PC-3 (cell line): ENCODE measurements at regions of chr2 and their contacts with region 1.

Region 1: GRCh38 chr2:177983183-177983788 is 89.3 kb downstream of the PDE11A start:
- DNase-seq: peak; percentile 66
- ATAC-seq: peak; percentile 67
- H3K4me3 ChIP-seq: no peak overlapping the region
- H3K27ac ChIP-seq: no peak overlapping the region
- H3K4me1 ChIP-seq: no peaks in the 10 kb centered on the region
- H3K27me3 ChIP-seq: peaks cover 27% of the 10 kb centered on the region
- CTCF ChIP-seq: peak; percentile 90

Region 2: GRCh38 chr2:177842243-177842642 is 141.0 kb before region 1 on chr2:
- CTCF ChIA-PET with region 1: no interaction called
- POLR2A ChIA-PET with region 1: no interaction called
- intact Hi-C with region 1: no loop called
- DNase-seq: no peak
- ATAC-seq: no peak
- H3K4me3 ChIP-seq: no peak overlapping the region
- H3K27ac ChIP-seq: no peak overlapping the region
- H3K4me1 ChIP-seq: no peaks in the 10 kb centered on the region
- H3K27me3 ChIP-seq: 0 out of 2 replicates have a peak, but pooled peaks cover 5% of the 10 kb centered on the region
- CTCF ChIP-seq: no peak

Region 3: DNA sequence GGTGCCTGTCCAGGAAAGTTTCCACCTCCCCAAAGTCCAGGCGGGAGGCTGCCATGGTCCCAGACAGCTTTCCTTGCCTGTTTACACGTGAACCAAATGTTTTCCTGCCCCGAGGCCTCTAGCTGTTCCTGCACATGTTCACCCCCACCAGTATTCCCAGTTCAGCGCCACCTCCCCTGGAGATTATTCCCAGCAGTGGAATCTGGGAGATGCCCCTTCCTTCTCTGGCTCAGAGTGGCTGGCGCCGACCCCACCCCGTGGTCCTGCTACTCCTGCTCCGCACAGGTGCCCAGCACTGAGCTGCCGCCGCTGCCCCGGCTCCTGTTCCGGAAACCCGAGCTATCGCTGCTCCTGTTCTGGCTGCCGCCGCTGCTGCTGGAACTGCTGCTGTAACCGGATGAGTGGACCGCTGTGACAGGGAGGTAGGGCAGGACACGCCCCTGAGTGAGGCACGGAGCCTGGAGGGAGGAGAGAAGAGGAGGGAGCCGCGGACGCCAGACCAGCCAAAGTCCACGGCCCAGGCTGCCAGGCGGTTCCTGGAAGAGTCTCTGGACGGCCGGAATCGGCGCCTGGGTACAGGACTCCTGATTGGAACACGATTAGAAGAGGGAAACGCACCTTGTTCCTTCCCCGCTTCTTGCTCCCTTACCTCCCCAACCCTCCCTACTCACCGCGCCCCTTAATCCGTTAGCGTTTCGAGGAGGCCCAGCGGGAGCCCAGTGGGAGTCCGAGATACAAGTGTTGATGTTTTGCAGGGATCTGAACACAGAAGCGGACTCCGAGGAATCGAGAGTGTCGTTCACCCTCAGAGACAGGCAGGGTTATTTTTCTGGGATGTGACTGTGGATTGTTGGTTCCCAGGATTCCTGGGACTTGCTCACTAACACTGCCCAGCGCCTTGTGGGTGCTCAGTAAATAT is 89.4 kb after region 1 on chr2 and contains the start of gene PDE11A:
- CTCF ChIA-PET with region 1: no interaction called
- POLR2A ChIA-PET with region 1: no interaction called
- intact Hi-C with region 1: loop called (anchors 5 kb)
- DNase-seq: peak; percentile 88
- ATAC-seq: peak; percentile 98
- H3K4me3 ChIP-seq: peak within 1 kb of the TSS; percentile 67
- H3K27ac ChIP-seq: no peak within 1 kb of the TSS
- H3K4me1 ChIP-seq: peaks cover 27% of the 10 kb centered on the region
- H3K27me3 ChIP-seq: peaks cover 3% of the 10 kb centered on the region; the same call in 1 of the 2 replicates
- CTCF ChIP-seq: no peak
- total RNA-seq, gene PDE11A: 0.15 and 0.23 TPM in 2 replicates

Region 4: DNA sequence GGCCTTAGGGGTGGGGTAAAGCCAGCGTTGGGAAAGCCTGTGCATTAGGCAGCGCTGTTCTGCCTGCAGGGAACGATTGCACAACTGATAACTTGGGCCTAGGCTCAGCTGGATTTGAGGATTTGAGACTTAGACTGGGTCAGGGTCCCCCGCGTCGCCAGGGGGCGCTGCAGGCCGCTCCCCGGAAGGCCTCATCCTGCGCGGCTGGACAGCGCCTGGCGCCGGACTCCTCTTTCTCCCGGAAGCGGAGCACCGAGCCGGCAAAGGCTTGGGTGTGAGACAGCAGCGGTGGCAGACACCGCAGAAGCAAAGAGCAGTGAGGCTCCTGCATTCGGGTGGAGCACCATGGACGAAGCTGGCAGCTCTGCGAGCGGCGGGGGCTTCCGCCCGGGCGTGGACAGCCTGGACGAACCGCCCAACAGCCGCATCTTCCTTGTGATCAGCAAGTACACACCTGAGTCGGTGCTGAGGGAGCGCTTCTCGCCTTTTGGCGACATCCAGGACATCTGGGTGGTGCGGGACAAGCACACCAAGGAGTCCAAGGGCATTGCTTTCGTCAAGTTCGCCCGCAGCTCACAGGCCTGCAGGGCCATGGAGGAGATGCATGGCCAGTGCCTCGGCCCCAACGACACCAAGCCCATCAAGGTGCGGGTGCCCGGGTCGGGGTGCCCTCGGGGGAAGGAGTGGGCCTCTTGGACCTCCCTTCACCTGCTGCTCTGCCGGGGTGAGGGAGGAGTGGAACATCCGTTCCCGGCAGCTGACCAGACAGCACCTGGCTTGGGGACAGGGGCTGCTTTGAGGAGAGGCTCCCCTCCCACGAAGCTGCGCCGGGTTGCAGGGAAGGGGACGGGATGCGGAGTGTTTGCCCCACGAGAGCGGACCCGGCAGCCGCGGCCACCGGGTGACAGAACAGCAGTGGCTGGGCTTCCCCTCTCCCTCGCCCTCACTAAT is 129.2 kb after region 1 on chr2 and contains the start of gene RBM45:
- CTCF ChIA-PET with region 1: no interaction called
- POLR2A ChIA-PET with region 1: no interaction called
- intact Hi-C with region 1: loop called (anchors 5 kb)
- DNase-seq: peak; percentile 94
- ATAC-seq: peak; percentile 94
- H3K4me3 ChIP-seq: peak within 1 kb of the TSS; percentile 92
- H3K27ac ChIP-seq: peak within 1 kb of the TSS; percentile 26; the same call in 1 of the 2 replicates
- H3K4me1 ChIP-seq: peaks cover 9% of the 10 kb centered on the region
- H3K27me3 ChIP-seq: no peaks in the 10 kb centered on the region
- CTCF ChIP-seq: peak; percentile 91
- total RNA-seq, gene RBM45: 10.5 and 14.3 TPM in 2 replicates